ENCODE measurements at regions of chr1 and their contacts with region 1.

Region 1: GRCh38 chr1:1471389-1472052 is at the start of gene ATAD3B:
- DNase-seq: peak; percentile 98
- ATAC-seq: peak; percentile 97
- H3K4me3 Mint-ChIP-seq: peak within 1 kb of the TSS; percentile 89
- H3K27ac Mint-ChIP-seq: peak within 1 kb of the TSS; percentile 67
- H3K4me1 Mint-ChIP-seq: peaks cover 21% of the 10 kb centered on the region
- H3K27me3 Mint-ChIP-seq: no peaks in the 10 kb centered on the region
- total RNA-seq, gene ATAD3B: 26.2 to 39.2 TPM

Region 2: GRCh38 chr1:1200851-1201810 is 270.4 kb before region 1 on chr1:
- CTCF ChIA-PET with region 1: no interaction called
- POLR2A ChIA-PET with region 1: no interaction called
- intact Hi-C with region 1: loop called in 1 of 2 experiments (anchors 1 kb)
- DNase-seq: peak; percentile 94
- ATAC-seq: peak; percentile 78
- H3K4me3 Mint-ChIP-seq: peak overlapping the region; percentile 69
- H3K27ac Mint-ChIP-seq: peak overlapping the region; percentile 85
- H3K4me1 Mint-ChIP-seq: peaks cover 12% of the 10 kb centered on the region
- H3K27me3 Mint-ChIP-seq: no peaks in the 10 kb centered on the region

Region 3: GRCh38 chr1:1324521-1325287 is 146.8 kb before region 1 on chr1 and contains the starts of genes CPTP and INTS11:
- CTCF ChIA-PET with region 1: no interaction called
- POLR2A ChIA-PET with region 1: no interaction called
- intact Hi-C with region 1: loop called in 1 of 2 experiments (anchors 1 kb)
- DNase-seq: peak; percentile 98
- ATAC-seq: peak; percentile 90
- H3K4me3 Mint-ChIP-seq: peak within 1 kb of the TSS; percentile 80
- H3K27ac Mint-ChIP-seq: peak within 1 kb of the TSS; percentile 83
- H3K4me1 Mint-ChIP-seq: peaks cover 31% of the 10 kb centered on the region
- H3K27me3 Mint-ChIP-seq: no peaks in the 10 kb centered on the region
- total RNA-seq, gene CPTP: 9.9 to 11.4 TPM
- total RNA-seq, gene INTS11: 117 to 151 TPM

Region 4: DNA sequence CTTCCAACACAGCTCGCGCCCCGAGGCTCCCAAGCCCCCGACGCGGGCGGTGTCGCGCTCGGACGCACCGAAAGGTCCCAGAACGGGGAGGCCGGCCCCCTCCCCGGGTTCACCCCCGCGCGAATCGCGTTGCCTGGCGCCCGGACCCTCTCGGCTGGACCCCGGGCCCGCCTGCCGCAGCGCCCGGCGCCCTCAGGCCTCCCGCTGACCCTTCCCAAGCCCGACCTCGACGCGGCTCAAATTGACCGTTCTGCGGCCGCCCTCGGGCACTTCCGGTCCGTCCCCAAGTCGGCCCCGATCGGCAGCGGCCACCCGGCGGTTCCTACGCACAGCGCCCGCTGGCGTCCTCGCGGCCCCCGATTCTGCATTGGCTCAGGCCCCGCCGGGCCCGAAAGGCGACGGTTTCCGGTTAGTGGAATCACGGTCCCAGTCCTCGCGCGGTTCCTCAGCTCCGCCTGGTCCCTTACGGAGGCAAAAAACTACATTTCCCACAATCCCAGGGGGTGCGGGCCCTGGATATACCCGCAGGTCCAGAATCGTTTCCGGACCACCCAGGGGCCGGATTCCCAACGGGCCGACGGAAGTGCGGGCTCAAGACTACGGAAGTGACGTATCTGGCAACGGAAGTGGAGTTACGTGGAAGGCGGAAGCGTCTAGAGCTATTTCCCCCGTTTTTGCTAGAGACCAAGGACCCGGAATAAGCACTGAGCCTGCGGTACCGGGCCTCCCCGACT is 96.4 kb before region 1 on chr1 and contains the start of gene AURKAIP1:
- CTCF ChIA-PET with region 1: no interaction called
- POLR2A ChIA-PET with region 1: no interaction called
- intact Hi-C with region 1: loop called in 1 of 2 experiments (anchors 1 kb)
- DNase-seq: peak; percentile 98
- ATAC-seq: peak; percentile 97
- H3K4me3 Mint-ChIP-seq: peak within 1 kb of the TSS; percentile 87
- H3K27ac Mint-ChIP-seq: peak within 1 kb of the TSS; percentile 91
- H3K4me1 Mint-ChIP-seq: peaks cover 26% of the 10 kb centered on the region
- H3K27me3 Mint-ChIP-seq: no peaks in the 10 kb centered on the region
- total RNA-seq, gene AURKAIP1: 89.5 to 117 TPM

Region 5: GRCh38 chr1:1406817-1407635 is 64.5 kb before region 1 on chr1 and contains the start of gene MRPL20:
- CTCF ChIA-PET with region 1: no interaction called
- POLR2A ChIA-PET with region 1: no interaction called
- intact Hi-C with region 1: loop called in 1 of 2 experiments (anchors 1 kb)
- DNase-seq: peak; percentile 98
- ATAC-seq: peak; percentile 95
- H3K4me3 Mint-ChIP-seq: peak within 1 kb of the TSS; percentile 92
- H3K27ac Mint-ChIP-seq: peak within 1 kb of the TSS; percentile 91
- H3K4me1 Mint-ChIP-seq: peaks cover 41% of the 10 kb centered on the region
- H3K27me3 Mint-ChIP-seq: no peaks in the 10 kb centered on the region
- total RNA-seq, gene MRPL20: 126 to 143 TPM

Region 6: DNA sequence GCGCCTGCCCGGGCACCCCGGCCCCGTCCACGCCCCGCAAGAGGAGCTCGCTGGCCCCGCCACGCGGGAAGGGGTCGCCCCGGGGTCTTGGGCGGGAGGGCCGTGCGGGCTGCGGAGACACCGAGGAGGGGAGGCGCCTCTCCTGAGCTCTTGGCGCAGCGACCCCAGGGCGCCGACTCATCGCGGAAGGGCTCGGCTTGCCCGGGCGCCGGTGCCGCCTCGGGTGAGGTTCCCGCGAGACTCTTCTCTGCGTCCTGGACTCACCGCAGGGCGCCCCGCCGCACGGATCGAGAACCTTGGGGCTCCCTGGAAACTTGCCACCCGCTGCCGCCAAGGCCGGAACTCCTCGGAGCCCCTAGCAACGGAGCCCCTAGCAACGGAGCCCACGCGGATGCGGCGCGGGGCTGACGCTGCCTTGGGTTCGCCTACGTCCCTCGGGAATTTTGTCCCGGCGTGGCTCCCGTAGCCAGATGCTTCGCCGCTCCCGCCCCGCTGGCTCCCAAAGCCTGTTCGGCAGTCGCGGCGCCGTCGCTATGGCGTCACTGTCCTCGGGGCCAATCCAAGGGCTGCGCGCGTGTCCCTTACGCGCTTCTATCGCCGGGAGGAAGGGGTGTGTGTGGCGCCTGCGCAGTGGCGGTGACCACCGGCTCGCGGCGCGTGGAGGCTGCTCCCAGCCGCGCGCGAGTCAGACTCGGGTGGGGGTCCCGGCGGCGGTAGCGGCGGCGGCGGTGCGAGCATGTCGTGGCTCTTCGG is 40.2 kb after region 1 on chr1 and contains the start of gene ATAD3A:
- CTCF ChIA-PET with region 1: interaction called, 3 read pairs
- POLR2A ChIA-PET with region 1: no interaction called
- intact Hi-C with region 1: loop called in 1 of 2 experiments (anchors 1 kb)
- DNase-seq: peak; percentile 99
- ATAC-seq: peak; percentile 97
- H3K4me3 Mint-ChIP-seq: peak within 1 kb of the TSS; percentile 93
- H3K27ac Mint-ChIP-seq: peak within 1 kb of the TSS; percentile 97
- H3K4me1 Mint-ChIP-seq: peaks cover 7% of the 10 kb centered on the region
- H3K27me3 Mint-ChIP-seq: no peaks in the 10 kb centered on the region
- total RNA-seq, gene ATAD3A: 39.9 to 42.9 TPM

Region 7: DNA sequence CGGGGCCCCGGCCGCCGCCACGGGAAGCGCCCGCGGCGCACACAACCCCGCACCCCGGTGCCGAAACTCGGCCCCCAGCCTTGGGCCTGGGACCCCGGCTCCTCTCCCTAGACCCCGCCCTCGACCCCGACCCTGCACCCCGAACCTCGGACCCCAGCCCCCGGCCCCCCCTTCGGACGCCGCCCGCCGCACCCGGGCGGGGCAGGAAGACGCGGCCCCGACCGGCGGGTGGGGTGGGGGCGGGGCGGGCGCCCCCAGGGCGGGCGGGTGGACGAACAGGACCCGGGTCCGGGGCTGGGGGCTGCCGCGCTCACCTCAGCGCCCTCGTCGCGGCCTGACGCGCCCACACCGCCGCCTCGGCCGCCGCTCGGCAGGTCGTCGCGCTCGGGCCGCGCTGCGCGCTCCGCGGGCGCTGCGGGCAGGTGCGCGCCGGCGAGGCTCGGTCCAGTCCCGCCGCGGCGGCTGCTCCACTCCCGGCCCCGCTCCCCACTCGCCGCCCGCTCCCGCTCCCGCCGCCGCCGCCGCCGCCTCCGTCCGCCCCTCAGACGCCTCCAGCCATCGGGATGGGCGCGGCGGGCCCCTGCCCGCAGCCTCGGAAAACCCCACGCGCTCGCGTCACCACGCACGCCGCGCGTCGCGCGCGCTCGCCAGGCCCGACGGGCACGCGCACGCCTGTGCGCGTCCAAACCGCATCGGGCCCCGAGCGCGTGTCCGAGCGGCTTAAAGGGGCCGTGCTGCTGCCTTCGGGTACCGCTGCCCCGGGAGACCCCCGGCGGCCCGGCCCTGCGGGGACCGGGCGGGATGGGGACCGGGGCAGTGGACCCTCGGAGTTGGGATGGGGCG is 419.2 kb after region 1 on chr1 and contains the start of gene GNB1:
- CTCF ChIA-PET with region 1: no interaction called
- POLR2A ChIA-PET with region 1: no interaction called
- intact Hi-C with region 1: loop called in 1 of 2 experiments (anchors 1 kb)
- DNase-seq: peak; percentile 91
- ATAC-seq: peak; percentile 47
- H3K4me3 Mint-ChIP-seq: peak within 1 kb of the TSS; percentile 88
- H3K27ac Mint-ChIP-seq: peak within 1 kb of the TSS; percentile 84
- H3K4me1 Mint-ChIP-seq: peaks cover 54% of the 10 kb centered on the region
- H3K27me3 Mint-ChIP-seq: no peaks in the 10 kb centered on the region
- total RNA-seq, gene GNB1: 347 to 669 TPM